Psoas muscle (tissue), 8 donors: ENCODE measurements at regions of chr7 and their contacts with region 1.

Region 1: GRCh38 chr7:24401628-24402593 is 117.9 kb downstream of the NPY start:
- DNase-seq: no peak
- ATAC-seq: peak in 3 of 4 donors; percentile 57 to 81 (median 71)
- H3K4me3 ChIP-seq: peak overlapping the region; percentile 58
- H3K27ac ChIP-seq: peak overlapping the region; percentile 41
- H3K4me1 ChIP-seq: no peaks in the 10 kb centered on the region
- H3K27me3 ChIP-seq: no peaks in the 10 kb centered on the region
- CTCF ChIP-seq: peak; percentile 55

Region 2: GRCh38 chr7:24419077-24419476 is 17.2 kb after region 1 on chr7:
- intact Hi-C with region 1: no loop called
- DNase-seq: no peak
- ATAC-seq: peak in 2 of 4 donors; percentile 46 to 54
- H3K4me3 ChIP-seq: no peak overlapping the region
- H3K27ac ChIP-seq: no peak overlapping the region
- H3K4me1 ChIP-seq: no peaks in the 10 kb centered on the region
- H3K27me3 ChIP-seq: no peaks in the 10 kb centered on the region
- CTCF ChIP-seq: no peak

Region 3: DNA sequence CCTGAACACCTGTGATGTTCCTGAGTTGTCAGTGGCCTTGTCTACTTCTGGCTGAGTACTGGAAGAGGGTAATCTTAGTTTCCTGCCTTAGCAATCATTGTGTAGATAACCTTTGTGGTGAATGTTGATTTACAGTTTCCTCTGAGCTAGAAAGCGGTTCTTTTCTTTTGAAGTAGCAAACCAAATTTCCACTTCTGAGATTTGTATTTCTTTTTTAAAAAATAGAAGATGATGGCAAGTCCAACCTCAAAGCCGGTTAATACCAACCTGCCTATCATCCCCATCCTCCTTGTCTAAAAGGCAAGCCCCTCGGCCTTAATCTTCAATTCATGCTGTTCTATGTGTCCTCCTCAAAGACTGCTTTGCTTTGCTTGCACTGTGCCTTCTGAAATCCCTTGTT is 158.9 kb after region 1 on chr7:
- intact Hi-C with region 1: loop called in 1 of 2 experiments (anchors 10 kb)
- DNase-seq: no peak
- ATAC-seq: no peak
- H3K4me3 ChIP-seq: no peak overlapping the region
- H3K27ac ChIP-seq: no peak overlapping the region
- H3K4me1 ChIP-seq: no peaks in the 10 kb centered on the region
- H3K27me3 ChIP-seq: no peaks in the 10 kb centered on the region
- CTCF ChIP-seq: no peak

Region 4: DNA sequence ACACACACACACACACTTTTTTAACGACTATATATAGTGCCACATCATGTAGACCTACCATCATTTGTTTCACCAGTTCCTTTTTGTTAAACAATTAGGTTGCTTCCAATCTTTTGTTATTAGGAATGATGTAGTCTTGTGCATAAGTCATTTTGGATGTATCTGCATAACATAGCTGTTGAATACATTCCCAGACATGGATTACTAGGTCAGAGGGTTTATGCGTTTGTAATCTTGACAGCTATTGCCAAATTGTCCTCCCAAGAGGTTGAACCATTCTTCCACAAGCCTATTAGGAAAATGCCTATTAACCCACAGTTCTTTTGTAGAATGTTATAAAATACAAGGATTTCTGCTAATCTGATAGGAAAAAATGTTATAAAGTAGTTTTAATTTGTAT is 258.6 kb after region 1 on chr7:
- intact Hi-C with region 1: loop called (anchors 5 kb)
- DNase-seq: no peak
- ATAC-seq: peak in 1 of 4 donors; percentile 44
- H3K4me3 ChIP-seq: no peak overlapping the region
- H3K27ac ChIP-seq: no peak overlapping the region
- H3K4me1 ChIP-seq: no peaks in the 10 kb centered on the region
- H3K27me3 ChIP-seq: no peaks in the 10 kb centered on the region
- CTCF ChIP-seq: no peak

Region 5: GRCh38 chr7:24665564-24666294 is 263.8 kb after region 1 on chr7:
- intact Hi-C with region 1: loop called (anchors 5 kb)
- DNase-seq: no peak
- ATAC-seq: peak in 3 of 4 donors; percentile 68 to 79 (median 68)
- H3K4me3 ChIP-seq: no peak overlapping the region
- H3K27ac ChIP-seq: no peak overlapping the region
- H3K4me1 ChIP-seq: no peaks in the 10 kb centered on the region
- H3K27me3 ChIP-seq: no peaks in the 10 kb centered on the region
- CTCF ChIP-seq: peak; percentile 70